Activated naive CD8-positive, alpha-beta T cell treated with anti-CD3 and anti-CD28 coated beads, Interleukin-2, amount 10 ng/mL, durations not matched to agents 7 days and 5 days (primary cell): ENCODE measurements at regions of chrX and their contacts with region 1.

Region 1: GRCh38 chrX:150879855-150880808 is 18.3 kb downstream of the CD99L2 start:
- DNase-seq: no peak
- ATAC-seq: peak; percentile 68
- H3K4me3 Mint-ChIP-seq: peak overlapping the region; percentile 55
- H3K27ac Mint-ChIP-seq: peak overlapping the region; percentile 79
- H3K4me1 Mint-ChIP-seq: peaks cover 27% of the 10 kb centered on the region
- H3K27me3 Mint-ChIP-seq: no peaks in the 10 kb centered on the region

Region 2: DNA sequence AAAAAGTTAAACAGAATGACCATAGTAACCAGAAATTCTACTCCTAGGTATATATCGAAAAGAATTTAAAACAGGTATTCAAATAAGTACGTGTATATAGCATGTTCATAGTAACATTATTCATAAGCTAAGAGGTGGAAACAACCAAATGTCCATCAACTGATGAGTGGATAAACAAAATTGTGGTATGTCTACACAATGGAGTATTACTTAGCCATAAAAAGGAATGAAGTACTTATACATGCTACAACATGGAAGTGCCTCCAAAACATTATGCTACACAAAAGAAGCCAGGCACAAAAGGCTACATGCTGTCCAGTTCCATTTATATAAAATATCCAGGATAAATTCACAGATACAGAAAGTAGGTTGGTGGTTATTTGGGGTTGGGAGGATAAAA is 58.2 kb before region 1 on chrX:
- POLR2A ChIA-PET with region 1: no interaction called
- DNase-seq: no peak
- ATAC-seq: no peak
- H3K4me3 Mint-ChIP-seq: no peak overlapping the region
- H3K27ac Mint-ChIP-seq: no peak overlapping the region
- H3K4me1 Mint-ChIP-seq: peaks cover 3% of the 10 kb centered on the region
- H3K27me3 Mint-ChIP-seq: no peaks in the 10 kb centered on the region

Region 3: DNA sequence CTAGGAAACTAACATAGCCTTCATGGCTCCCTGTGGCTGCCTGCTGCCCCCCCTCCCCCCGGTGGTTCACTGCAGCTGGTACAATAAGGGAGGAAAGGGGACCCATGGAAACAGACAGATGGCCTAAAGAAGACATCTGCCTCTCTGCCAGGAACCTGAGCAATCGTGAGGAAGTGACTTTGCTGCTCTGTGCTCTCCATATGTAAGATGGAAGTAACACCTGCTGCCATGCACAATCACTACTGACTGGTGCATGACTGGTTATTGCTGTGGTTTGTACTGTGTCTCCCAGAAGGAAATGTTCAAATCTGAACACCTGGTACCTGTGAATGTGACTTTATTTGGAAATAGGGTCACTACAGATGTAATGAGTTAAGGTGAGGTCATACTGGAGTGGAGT is 25.3 kb before region 1 on chrX:
- POLR2A ChIA-PET with region 1: no interaction called
- DNase-seq: no peak
- ATAC-seq: no peak
- H3K4me3 Mint-ChIP-seq: no peak overlapping the region
- H3K27ac Mint-ChIP-seq: no peak overlapping the region
- H3K4me1 Mint-ChIP-seq: no peaks in the 10 kb centered on the region
- H3K27me3 Mint-ChIP-seq: no peaks in the 10 kb centered on the region

Region 4: GRCh38 chrX:150868625-150869024 is 11.5 kb before region 1 on chrX:
- POLR2A ChIA-PET with region 1: interaction called, 10 read pairs
- DNase-seq: no peak
- ATAC-seq: no peak
- H3K4me3 Mint-ChIP-seq: no peak overlapping the region
- H3K27ac Mint-ChIP-seq: no peak overlapping the region
- H3K4me1 Mint-ChIP-seq: peaks cover 17% of the 10 kb centered on the region
- H3K27me3 Mint-ChIP-seq: no peaks in the 10 kb centered on the region